GM13976 (cell line): ENCODE measurements at regions of chr12 and their contacts with region 1.

Region 1: DNA sequence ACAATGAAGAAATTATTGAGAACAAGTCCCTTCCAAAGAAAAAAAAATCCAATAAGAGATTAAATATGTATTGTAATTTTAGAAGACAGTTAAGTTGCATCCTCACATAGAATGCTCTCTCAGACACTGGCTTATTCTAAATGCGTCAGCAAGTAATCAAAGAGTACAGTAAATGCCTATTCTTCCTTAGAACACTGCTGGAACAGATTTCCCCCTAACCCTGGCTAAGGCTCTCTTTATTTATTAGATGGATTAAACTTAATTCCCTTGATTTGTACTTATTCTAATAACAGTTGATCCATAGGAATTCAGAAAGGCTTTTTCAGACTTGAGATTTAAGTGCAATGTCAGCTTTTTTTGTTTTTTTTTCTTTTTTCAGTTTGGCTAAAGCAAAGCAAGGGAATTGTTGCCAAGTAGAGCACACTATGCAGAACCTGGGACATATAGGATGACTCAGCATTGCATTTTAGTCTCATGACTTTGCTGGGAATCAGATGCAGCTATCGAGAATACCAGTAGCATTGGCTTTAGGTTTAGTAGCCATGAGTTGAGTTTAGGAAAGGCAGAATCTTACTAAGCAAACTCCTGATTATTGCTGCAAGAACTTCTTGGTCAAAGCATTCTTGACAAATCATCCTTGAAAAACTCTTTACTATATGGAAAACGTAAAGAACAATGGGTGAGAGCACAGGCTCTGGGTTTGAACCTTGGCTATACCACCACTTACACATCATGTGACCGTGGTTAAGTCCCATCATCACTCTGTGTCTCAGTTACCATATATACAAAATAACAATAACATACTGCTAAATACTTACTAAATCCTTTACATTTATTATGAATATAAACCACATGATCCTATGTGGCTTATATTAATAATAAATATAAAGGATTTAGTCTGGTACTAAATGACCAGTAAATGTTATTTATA is 26.7 kb downstream of the MED21 start:
- DNase-seq: no peak
- CTCF ChIP-seq: no peak

Region 2: DNA sequence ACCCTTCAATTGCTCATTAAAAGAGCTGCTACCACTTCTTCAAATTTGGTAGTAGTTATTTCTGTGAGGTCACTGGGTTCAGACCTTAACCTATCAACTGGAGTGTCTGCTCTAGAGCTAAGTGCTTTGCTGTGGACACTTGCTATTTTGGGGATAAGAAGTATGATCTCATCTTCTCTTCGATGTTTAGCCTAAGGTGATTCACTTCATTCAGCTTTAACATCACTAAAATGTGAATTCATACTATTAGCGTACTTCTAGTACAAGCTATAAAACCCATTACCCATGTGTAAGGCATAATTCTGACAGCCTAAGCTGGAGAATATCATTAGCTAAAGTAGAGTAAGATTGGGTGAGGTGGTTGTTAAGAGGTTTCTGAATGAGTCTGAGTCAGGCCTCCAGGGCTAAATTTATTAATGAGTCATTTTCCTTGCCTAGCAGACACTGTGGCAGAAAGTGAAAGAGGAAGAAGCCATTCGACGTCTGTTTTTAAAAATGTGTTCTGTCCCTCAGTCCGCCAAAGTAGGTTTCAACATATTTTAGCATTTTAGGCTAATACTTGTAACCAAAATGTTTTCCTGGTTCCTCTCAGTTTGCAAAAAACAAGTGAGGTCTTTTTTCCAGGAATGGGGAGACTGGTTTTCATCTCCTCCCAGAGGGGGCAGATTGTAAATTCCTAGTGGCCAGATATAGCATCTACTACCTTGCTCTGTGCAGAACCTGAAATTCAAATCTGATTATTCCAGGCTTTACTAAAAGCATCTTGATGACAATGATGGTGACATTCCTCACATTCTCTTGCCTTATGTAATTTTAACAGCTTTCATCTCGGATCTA is 750.1 kb before region 1 on chr12:
- in situ Hi-C with region 1: no loop called
- DNase-seq: peak; percentile 77
- CTCF ChIP-seq: no peak

Region 3: GRCh38 chr12:26732005-26732908 is 316.8 kb before region 1 on chr12:
- in situ Hi-C with region 1: no loop called
- DNase-seq: no peak
- CTCF ChIP-seq: no peak

Region 4: DNA sequence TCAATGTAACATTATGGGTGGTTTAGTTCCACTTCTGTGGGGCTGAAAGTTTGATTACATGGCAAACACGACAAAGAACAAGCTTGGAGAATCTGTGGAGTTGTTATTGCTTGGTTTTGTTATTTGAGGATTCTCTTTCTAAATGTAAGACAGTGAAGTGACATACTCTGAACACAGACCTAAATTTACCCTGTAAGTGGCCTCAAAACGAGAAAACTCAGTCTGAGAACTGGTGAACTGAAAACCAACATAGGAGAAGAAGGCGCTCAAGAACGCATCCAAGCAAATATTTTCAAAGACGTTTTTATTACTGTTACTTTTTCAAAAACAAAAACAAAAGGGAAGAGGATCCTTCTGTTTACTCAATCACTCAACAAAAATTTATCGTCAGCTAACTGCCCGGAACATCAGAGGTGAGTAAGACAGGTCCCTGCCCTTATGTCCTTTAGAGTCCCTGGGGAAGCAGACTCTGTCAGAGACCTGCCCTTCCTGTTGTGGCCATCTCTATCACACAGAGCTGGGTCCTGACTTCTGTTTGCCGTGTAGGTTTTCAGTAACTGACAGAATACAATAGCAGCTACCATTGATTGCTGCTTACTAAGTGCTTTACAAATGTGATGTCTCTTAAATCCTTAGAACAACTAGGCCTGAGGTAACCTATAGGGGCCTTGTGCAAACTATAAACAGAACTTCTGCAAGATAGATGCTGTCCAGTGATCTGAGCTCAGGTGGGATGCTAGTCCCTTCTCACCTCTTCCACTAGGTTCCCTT is 112.6 kb after region 1 on chr12:
- in situ Hi-C with region 1: no loop called
- DNase-seq: no peak
- CTCF ChIP-seq: no peak

Region 5: DNA sequence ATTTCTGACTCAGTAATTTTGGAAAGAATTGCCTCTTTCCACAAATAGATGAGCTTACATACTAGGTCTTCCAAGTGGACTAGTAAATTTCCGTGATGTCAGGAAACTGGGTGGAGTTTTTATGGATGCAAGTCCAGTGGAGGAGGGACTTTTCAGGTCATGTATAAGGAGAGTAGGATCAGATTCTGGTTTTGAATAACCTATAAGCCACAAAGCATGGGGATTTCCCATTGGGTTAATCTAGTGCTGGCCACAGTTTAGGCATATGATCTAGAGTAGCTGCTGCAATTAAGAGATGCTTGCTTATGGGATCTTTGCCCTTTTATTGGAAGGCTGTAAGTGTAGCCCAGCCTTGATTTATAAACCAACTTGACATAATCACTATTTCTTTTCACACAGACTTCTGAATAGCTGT is 228.8 kb after region 1 on chr12:
- in situ Hi-C with region 1: loop called (anchors 25 kb)
- DNase-seq: peak; percentile 43
- CTCF ChIP-seq: no peak

Region 6: GRCh38 chr12:27988594-27989233 is 939.6 kb after region 1 on chr12:
- in situ Hi-C with region 1: no loop called
- DNase-seq: no peak
- CTCF ChIP-seq: no peak